Heart right ventricle (tissue), 16 donors: ENCODE measurements at regions of chr21 and their contacts with region 1.

Region 1: DNA sequence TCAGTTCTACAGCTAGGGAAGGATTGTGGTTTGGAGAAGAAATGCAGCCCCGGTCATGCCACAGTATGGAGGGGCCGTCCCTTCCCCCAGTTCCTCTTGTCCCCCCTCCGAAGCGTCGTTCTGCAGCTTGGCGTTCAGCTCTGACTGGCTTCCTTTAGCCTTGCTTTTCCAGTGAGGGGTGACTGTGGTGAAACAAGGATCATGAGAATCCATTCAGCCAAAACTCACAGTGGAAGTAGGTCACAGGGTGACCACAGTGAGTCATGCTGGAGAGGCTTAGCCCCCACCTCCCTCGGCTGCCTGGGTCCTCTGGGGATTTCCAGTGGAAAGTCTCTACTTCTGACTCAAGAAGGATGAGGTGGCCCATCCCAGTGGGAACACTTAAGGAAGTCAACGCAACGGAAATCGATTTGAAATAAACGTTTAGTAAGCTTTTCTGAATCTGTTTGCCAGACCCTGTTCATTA is 37.3 kb upstream of the COL6A2 start:
- DNase-seq: peak; percentile 70 to 88
- ATAC-seq: peak; percentile 51 to 77 (median 72)
- H3K4me3 ChIP-seq: no peak overlapping the region
- H3K27ac ChIP-seq: peak overlapping the region in 9 of 10 donors; percentile 62 to 88 (median 81)
- H3K4me1 ChIP-seq: peaks cover 0 to 45% (median 29%) of the 10 kb centered on the region in 9 donors
- H3K27me3 ChIP-seq: peaks cover 0 to 36% (median 0%) of the 10 kb centered on the region in 7 donors
- CTCF ChIP-seq: no peak

Region 2: DNA sequence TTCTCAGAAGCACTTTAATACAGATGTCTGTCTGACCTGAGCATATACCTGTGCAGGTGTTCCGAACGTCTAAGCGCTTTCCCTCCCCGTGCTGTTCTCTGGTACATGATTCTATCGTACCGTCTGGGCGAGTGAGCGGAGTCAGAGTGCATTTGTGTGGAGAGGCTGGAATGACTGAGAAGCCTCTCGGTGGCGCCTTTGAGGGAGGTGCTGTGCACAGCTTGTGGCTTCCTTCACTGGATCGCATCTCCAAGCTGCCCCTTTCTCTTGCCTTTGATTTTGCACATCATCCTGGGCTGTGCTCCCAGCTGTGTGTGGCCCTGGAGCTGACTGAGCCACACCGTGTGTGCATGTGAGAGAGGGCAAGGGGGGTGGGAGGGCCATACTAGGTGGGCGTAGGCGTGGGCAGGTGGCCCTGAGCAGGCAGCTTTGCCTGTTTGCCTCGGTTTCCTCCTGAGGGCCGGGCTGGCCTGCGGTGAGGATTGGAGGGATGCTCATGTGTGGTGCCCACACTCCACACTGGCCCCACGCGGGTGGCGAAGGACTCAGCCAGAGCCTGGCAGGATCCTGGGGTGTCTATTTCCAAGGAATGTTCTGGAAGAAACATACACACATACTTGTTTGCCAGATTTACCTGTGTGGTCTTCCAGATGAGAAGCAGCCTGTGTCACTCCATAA is 880.9 kb before region 1 on chr21:
- intact Hi-C with region 1: no loop called
- DNase-seq: no peak
- ATAC-seq: peak in 1 of 8 donors; percentile 14
- H3K4me3 ChIP-seq: no peak overlapping the region
- H3K27ac ChIP-seq: no peak overlapping the region
- H3K4me1 ChIP-seq: no peaks in the 10 kb centered on the region
- H3K27me3 ChIP-seq: no peaks in the 10 kb centered on the region
- CTCF ChIP-seq: no peak

Region 3: GRCh38 chr21:45854690-45855247 is 205.9 kb before region 1 on chr21:
- intact Hi-C with region 1: no loop called
- DNase-seq: no peak
- ATAC-seq: no peak
- H3K4me3 ChIP-seq: no peak overlapping the region
- H3K27ac ChIP-seq: no peak overlapping the region
- H3K4me1 ChIP-seq: no peaks in the 10 kb centered on the region
- H3K27me3 ChIP-seq: peaks cover 0 to 13% (median 0%) of the 10 kb centered on the region in 7 donors
- CTCF ChIP-seq: no peak

Region 4: DNA sequence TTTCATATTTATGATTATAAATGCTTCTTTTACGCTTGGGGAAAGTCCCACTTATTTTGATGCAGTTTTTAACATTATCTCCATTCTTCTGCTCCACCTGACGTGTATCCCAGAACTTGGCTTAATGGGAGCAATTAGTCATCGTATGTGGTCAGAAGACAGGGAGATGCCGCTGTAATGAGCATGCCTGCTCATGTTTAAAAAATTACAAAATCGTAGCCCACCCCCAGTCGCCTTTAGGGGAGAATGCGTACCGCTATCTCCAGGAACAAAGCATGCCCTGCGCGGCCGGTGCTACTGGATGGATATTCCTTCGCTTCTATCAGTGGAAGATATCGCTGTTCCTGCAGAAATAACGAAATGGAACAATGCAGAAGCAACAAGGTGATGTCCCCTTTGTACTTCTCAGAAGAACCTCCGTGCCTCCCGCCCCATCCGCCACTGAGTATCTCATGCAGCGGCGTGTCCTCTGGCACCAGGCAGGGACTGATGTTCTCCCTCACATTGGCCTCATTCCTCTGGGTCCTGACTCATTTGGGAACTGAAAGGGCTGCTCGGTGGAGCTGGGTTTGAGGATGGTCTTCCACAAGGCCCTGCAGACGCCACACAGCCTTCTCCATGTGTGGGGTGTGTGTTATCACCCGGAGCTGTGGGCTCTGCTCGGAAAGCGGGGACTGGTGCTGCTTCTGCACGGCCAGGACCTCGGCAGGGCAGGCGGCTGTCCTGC is 195.4 kb before region 1 on chr21:
- intact Hi-C with region 1: no loop called
- DNase-seq: no peak
- ATAC-seq: no peak
- H3K4me3 ChIP-seq: no peak overlapping the region
- H3K27ac ChIP-seq: no peak overlapping the region
- H3K4me1 ChIP-seq: no peaks in the 10 kb centered on the region
- H3K27me3 ChIP-seq: peaks cover 0 to 15% (median 0%) of the 10 kb centered on the region in 7 donors
- CTCF ChIP-seq: no peak

Region 5: GRCh38 chr21:45981151-45982089 is 79.2 kb before region 1 on chr21 and contains the start of gene COL6A1:
- intact Hi-C with region 1: loop called in 1 of 10 experiments (anchors 5 kb)
- DNase-seq: peak; percentile 85
- ATAC-seq: peak; percentile 72 to 85 (median 77)
- H3K4me3 ChIP-seq: peak within 1 kb of the TSS; percentile 51 to 100 (median 96)
- H3K27ac ChIP-seq: peak within 1 kb of the TSS; percentile 64 to 92 (median 90)
- H3K4me1 ChIP-seq: peaks cover 0 to 65% (median 19%) of the 10 kb centered on the region in 9 donors
- H3K27me3 ChIP-seq: peaks cover 0 to 22% (median 0%) of the 10 kb centered on the region in 7 donors
- CTCF ChIP-seq: no peak
- total RNA-seq, gene COL6A1: 71.9 to 260 (median 100) TPM

Region 6: GRCh38 chr21:46025113-46025770 is 35.4 kb before region 1 on chr21:
- intact Hi-C with region 1: loop called in 1 of 10 experiments (anchors 5 kb)
- DNase-seq: no peak
- ATAC-seq: no peak
- H3K4me3 ChIP-seq: no peak overlapping the region
- H3K27ac ChIP-seq: peak overlapping the region in 4 of 10 donors; percentile 11 to 49 (median 35)
- H3K4me1 ChIP-seq: peaks cover 0 to 22% (median 9%) of the 10 kb centered on the region in 9 donors
- H3K27me3 ChIP-seq: no peaks in the 10 kb centered on the region
- CTCF ChIP-seq: no peak

Region 7: DNA sequence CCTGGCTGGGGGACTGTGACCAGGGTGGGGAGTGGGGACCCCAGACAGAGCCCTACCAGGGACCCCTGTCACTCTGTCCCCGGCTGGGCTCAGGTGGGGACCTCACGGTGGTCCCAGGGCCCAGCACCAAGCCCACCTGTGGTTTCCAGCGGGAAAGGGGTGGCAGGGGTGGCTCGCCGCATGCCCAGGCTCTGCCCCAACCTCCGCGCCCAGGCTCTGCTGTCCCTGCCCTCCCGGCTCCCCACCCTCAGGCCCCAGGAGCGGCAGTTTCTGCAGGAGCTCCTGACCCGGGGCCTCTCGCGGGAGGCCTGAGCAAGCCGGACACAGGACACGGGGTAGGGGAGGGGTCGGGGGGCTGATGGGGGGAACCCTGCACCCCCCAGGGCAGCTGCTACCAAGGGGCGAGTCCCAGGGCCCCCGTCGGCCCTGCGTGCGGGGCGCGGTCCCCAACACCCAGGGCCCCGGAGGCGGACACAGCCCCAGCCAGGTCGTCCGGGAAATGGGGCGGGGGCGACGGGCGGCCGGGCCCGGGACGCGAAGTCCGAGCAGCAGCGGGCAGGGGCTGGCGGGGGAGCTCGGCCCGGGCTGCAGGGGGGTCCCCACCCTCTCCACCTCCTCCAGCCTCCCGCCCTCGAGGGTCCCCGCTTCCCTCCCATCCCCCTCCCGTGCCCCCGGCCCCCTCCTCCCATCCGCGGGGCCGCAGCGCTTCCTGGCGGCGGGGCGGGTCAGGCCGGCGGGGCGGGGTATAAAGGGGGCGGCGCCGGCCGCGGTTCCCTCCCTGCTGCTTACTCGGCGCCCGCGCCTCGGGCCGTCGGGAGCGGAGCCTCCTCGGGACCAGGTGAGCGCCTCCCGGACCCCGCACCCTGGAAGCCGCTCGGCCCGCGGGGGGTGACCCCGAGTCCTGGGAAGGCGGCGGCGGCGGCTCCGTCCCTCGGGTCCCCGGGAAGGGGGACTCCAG is 37.0 kb after region 1 on chr21 and contains the start of gene COL6A2:
- intact Hi-C with region 1: loop called in 1 of 10 experiments (anchors 1 kb)
- DNase-seq: peak; percentile 64 to 77
- ATAC-seq: peak; percentile 77 to 94 (median 90)
- H3K4me3 ChIP-seq: peak within 1 kb of the TSS; percentile 64 to 90 (median 82)
- H3K27ac ChIP-seq: peak within 1 kb of the TSS; percentile 79 to 97 (median 93)
- H3K4me1 ChIP-seq: peaks cover 4 to 49% (median 16%) of the 10 kb centered on the region in 9 donors
- H3K27me3 ChIP-seq: peaks cover 0 to 54% (median 0%) of the 10 kb centered on the region in 7 donors
- CTCF ChIP-seq: peak in 8 of 9 donors; percentile 22 to 68 (median 48)
- total RNA-seq, gene COL6A2: 76.6 to 370 (median 119) TPM

Region 8: DNA sequence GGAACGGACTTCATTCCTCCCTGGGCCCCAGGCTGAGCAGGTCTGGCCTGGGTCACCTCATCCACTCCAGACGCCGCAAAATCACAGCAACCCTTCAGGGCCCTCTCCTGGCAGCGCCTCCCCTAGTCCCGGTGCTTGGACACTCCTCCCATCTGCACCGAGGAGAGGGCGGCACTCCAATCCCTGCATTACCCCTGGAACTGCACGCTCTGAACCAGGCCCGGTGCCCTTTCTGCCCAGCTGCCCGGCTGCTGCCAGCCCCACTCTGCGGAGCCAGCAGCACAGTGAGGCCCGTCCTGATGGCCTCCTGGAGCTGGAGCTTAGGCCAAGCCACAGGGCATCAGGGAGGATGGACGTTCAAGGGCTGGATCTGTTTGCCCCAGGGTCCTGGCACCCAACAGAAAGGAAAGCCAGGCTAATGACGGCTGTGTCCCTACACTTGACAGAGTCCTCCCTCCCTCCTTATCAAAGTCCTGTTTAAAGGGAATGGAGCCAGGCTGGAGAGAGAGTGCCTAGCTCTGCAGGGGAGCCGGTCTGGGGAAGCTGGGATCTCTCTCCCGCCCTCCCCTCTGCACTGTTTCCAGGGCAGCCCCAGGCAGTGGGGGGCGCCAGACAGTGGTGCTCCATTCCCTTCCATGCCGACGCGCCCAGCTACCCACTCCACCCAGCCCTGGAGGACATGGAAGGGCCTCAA is 50.0 kb after region 1 on chr21:
- intact Hi-C with region 1: loop called in 1 of 10 experiments (anchors 5 kb)
- DNase-seq: peak; percentile 76 to 78
- ATAC-seq: peak; percentile 79 to 97 (median 90)
- H3K4me3 ChIP-seq: peak overlapping the region in 5 of 10 donors; percentile 1 to 28 (median 7)
- H3K27ac ChIP-seq: peak overlapping the region; percentile 61 to 87 (median 80)
- H3K4me1 ChIP-seq: peaks cover 10 to 29% (median 16%) of the 10 kb centered on the region in 9 donors
- H3K27me3 ChIP-seq: no peaks in the 10 kb centered on the region
- CTCF ChIP-seq: peak in 5 of 9 donors; percentile 3 to 41 (median 34)